GM12878 (cell line): ENCODE measurements at regions of chr3 and their contacts with region 1.

Region 1: DNA sequence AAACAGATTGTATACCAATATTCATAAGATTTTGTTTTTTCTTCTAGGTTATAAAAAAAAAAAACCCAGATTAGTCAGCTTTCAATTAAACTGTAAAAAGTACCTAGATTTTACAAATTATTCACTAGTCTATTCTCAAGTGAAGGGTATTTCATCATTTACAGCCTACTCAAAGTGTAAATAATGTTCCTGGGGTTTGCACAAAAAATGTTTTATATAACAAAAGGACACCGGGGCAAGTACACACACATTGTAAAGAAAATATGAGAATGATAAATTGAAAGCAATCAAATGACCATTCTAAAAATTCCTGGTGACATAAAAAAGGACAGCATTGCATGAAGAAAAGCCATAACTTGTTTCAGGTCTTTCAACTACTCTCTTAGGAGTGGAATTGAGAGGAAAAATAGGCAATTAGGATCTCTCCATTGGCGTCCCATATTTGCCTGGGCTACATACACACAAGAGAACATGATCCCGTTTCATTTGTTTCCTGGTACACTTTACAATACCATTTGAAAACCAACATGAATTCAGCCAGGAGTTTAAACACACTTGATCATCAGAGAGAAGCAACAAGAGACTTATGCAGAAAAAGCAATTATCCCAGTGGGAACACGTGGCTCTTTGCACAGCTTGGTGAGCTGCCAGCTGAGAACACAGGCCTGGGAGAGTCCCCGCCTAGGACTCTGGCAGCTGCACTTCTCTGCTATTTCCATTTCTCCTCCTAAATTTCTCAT is 1039.2 kb downstream of the ROBO1 start:
- DNase-seq: no peak
- ATAC-seq: no peak
- H3K4me3 ChIP-seq: no peak overlapping the region
- H3K27ac ChIP-seq: no peak overlapping the region
- H3K4me1 ChIP-seq: no peaks in the 10 kb centered on the region
- H3K27me3 ChIP-seq: no peaks in the 10 kb centered on the region
- CTCF ChIP-seq: no peak
- EP300 ChIP-seq: no peak
- POLR2A ChIP-seq: no peak
- RAD21 ChIP-seq: no peak

Region 2: DNA sequence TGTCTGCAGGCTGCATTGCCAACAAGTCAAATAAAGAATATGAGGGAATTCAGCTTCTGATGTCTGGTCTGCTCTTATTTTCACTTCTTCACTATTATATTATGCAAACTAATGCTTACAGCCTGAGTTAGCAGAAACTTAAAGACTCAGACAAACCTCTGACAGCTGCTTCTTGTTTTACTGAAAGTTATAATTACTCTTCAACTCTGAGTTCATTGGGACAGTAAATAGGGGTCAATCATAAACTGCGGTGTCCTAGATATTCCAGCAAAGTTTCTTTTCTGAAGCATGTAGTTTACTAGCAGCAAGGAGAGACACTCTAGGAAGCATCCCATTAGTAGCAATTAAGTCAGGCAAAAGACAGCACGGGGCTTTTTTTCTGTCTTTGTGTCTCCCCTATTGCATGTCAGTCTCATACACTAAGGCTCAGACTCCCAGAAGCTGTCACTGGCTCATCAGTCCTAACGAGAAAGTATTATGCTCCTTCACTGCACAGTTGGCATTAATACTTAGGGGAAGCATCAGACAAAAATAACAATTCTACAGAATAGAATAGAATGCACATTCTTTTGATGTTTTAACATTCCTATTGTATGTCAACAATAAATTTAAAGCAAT is 21.6 kb before region 1 on chr3:
- CTCF ChIA-PET with region 1: interaction called, 4 read pairs
- POLR2A ChIA-PET with region 1: interaction called, 3 read pairs
- RAD21 ChIA-PET with region 1: interaction called, 5 read pairs
- SMC1A ChIA-PET with region 1: interaction called, 11 read pairs
- in situ Hi-C with region 1: no loop called
- intact Hi-C with region 1: no loop called
- DNase-seq: no peak
- ATAC-seq: no peak; the same call in 2 of the 3 replicates
- H3K4me3 ChIP-seq: no peak overlapping the region
- H3K27ac ChIP-seq: no peak overlapping the region
- H3K4me1 ChIP-seq: no peaks in the 10 kb centered on the region
- H3K27me3 ChIP-seq: no peaks in the 10 kb centered on the region
- CTCF ChIP-seq: no peak
- EP300 ChIP-seq: no peak
- POLR2A ChIP-seq: no peak
- RAD21 ChIP-seq: no peak

Region 3: DNA sequence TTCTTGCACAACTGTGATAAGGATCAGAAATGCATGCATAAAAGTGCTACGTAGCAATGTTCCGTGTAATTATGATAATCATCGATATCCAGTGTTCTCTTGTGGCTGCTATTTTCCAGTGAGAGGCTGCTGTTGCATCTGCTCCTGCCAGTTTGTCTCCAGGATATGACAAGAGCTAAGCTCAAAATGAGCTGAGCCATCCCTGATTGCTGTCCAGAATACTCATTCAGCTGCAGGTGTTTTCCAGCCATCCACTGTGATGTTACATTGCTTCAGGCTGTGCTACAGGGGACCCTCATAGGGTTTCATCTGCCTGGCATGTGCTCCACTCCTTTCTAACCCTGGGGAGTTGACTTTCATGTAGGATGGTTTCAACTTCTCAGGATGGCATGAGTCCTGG is 63.2 kb after region 1 on chr3:
- CTCF ChIA-PET with region 1: no interaction called
- POLR2A ChIA-PET with region 1: no interaction called
- RAD21 ChIA-PET with region 1: no interaction called
- SMC1A ChIA-PET with region 1: interaction called, 28 read pairs
- in situ Hi-C with region 1: no loop called
- intact Hi-C with region 1: no loop called
- DNase-seq: no peak
- ATAC-seq: no peak; the same call in 1 of the 3 replicates
- H3K4me3 ChIP-seq: no peak overlapping the region
- H3K27ac ChIP-seq: no peak overlapping the region
- H3K4me1 ChIP-seq: no peaks in the 10 kb centered on the region
- H3K27me3 ChIP-seq: no peaks in the 10 kb centered on the region
- CTCF ChIP-seq: no peak
- EP300 ChIP-seq: no peak
- POLR2A ChIP-seq: no peak
- RAD21 ChIP-seq: no peak

Region 4: DNA sequence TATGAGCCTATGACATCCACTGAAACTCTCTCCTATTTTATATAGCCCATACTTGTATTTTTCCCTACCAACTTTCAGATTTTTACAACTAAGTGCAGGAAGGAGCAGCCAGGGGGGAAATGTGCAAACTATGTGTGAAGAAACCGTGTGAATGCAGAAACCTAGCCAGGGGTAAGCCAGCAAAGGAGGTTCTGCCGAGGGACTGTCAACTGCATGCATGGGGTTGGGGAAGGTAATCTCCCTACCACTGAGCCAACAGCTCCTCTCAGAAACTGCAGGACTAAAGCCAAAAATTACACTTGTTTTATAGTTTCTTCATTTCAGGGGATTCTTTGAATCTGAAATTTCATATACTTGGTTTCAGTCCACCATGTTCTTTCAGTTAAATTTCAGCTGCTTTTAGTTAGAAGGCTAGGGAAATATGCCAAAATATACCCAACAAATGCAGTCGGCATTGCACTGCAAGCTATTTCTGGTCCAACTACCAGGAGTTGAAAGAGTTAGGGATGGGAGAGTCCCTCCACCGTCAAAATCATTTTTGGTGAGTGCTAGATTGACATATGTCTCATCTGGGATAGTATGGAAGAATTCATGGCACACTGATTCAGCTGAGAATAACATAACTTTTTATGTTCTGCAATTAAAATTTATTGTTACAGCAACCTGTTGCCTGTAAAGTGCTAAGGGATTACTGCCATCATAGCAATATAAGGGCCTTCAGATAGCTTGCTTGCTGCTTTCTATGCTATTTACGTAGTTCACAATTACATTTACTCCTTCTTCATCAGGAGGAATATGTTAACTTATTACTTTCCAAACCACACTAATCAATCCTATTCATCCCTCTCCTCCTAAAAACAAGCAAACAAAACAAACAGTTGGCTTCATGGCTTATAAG is 135.0 kb after region 1 on chr3:
- CTCF ChIA-PET with region 1: no interaction called
- POLR2A ChIA-PET with region 1: no interaction called
- RAD21 ChIA-PET with region 1: interaction called, 5 read pairs
- SMC1A ChIA-PET with region 1: interaction called, 11 read pairs
- in situ Hi-C with region 1: no loop called
- intact Hi-C with region 1: no loop called
- DNase-seq: no peak
- ATAC-seq: peak; percentile 34; the same call in 2 of the 3 replicates
- H3K4me3 ChIP-seq: no peak overlapping the region
- H3K27ac ChIP-seq: no peak overlapping the region
- H3K4me1 ChIP-seq: no peaks in the 10 kb centered on the region
- H3K27me3 ChIP-seq: no peaks in the 10 kb centered on the region
- CTCF ChIP-seq: no peak
- EP300 ChIP-seq: no peak
- POLR2A ChIP-seq: no peak
- RAD21 ChIP-seq: no peak

Region 5: GRCh38 chr3:78986416-78987101 is 258.0 kb after region 1 on chr3:
- CTCF ChIA-PET with region 1: no interaction called
- POLR2A ChIA-PET with region 1: no interaction called
- RAD21 ChIA-PET with region 1: no interaction called
- SMC1A ChIA-PET with region 1: no interaction called
- in situ Hi-C with region 1: no loop called
- intact Hi-C with region 1: no loop called
- DNase-seq: no peak
- ATAC-seq: no peak
- H3K4me3 ChIP-seq: no peak overlapping the region
- H3K27ac ChIP-seq: no peak overlapping the region
- H3K4me1 ChIP-seq: no peaks in the 10 kb centered on the region
- H3K27me3 ChIP-seq: no peaks in the 10 kb centered on the region
- CTCF ChIP-seq: no peak
- EP300 ChIP-seq: no peak
- POLR2A ChIP-seq: no peak
- RAD21 ChIP-seq: no peak

Region 6: DNA sequence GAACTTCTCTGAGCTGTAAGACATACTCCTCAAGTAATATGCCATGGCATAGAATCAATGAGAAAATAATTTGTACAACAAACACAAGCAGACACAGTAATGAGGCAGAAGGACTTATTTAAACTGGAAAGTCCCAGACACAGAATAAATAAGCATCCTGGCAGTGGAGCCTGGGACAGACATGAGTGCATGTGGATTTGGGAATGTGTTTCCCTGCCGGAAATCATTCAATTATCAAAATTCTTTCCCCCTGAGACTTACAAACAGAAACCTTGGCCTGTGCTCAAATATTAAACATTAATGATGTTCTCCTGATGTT is 519.1 kb after region 1 on chr3:
- CTCF ChIA-PET with region 1: no interaction called
- POLR2A ChIA-PET with region 1: no interaction called
- RAD21 ChIA-PET with region 1: no interaction called
- SMC1A ChIA-PET with region 1: no interaction called
- in situ Hi-C with region 1: no loop called
- intact Hi-C with region 1: no loop called
- DNase-seq: no peak
- ATAC-seq: no peak
- H3K4me3 ChIP-seq: no peak overlapping the region
- H3K27ac ChIP-seq: no peak overlapping the region
- H3K4me1 ChIP-seq: no peaks in the 10 kb centered on the region
- H3K27me3 ChIP-seq: no peaks in the 10 kb centered on the region
- CTCF ChIP-seq: no peak
- EP300 ChIP-seq: no peak
- POLR2A ChIP-seq: no peak
- RAD21 ChIP-seq: no peak